ENCODE measurements at regions of chr12 and their contacts with region 1.

Region 1: DNA sequence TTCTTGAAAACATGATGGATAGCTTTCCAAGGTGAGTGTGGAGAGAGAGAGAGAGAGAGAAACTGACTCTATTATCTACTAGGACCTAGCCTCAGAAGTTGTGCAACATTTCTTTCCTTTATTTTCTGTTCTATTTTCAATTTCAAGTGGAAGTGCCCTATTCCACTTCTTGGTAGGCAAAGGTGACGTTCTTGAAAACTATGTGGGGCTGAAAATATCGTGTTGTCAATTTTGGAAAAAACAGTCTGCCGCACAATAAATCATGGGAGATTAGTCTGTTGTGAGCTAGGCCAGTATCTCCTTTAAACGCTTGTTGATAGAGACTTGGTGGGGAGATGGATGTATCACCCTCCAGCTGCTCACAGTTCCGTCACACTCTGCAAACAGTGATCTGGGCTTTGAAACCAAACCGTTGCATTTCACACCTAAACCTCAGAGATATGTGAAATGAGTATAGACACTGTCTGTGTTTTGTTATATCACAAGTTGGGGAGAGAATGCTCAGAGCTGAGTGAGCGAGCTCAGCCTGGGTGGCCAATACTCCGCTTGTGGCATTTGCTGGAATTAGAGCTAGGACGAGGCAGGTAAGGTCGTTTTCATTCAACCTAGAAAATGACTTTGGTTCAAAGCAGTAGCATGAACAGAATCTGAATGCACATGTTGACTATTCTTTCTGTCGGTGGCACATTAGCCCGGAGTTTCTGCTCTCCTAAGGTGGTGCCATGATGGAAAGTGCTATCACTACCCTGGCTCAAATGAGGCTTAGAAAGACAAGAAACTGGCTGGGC is 75.1 kb upstream of the ST8SIA1 start:
- DNase-seq: peak in 4 of 5 donors; percentile 32 to 86 (median 61)
- H3K4me3 ChIP-seq: peak overlapping the region; percentile 52
- H3K4me3 Mint-ChIP-seq: peak overlapping the region; percentile 83 to 96 (median 87)
- H3K27ac ChIP-seq: peak overlapping the region; percentile 86
- H3K27ac Mint-ChIP-seq: peak overlapping the region; percentile 91 to 99 (median 96)
- H3K4me1 ChIP-seq: peaks cover 8% of the 10 kb centered on the region
- H3K4me1 Mint-ChIP-seq: peaks cover 57 to 67% (median 66%) of the 10 kb centered on the region in 3 donors
- H3K27me3 ChIP-seq: no peaks in the 10 kb centered on the region
- H3K27me3 Mint-ChIP-seq: no peaks in the 10 kb centered on the region

Region 2: GRCh38 chr12:22396253-22396652 is 13.3 kb before region 1 on chr12:
- CTCF ChIA-PET with region 1: interaction called, 24 read pairs
- POLR2A ChIA-PET with region 1: interaction called, 40 read pairs
- DNase-seq: peak in 3 of 5 donors; percentile 8 to 64 (median 64)
- H3K4me3 ChIP-seq: no peak overlapping the region
- H3K4me3 Mint-ChIP-seq: peak overlapping the region; percentile 38 to 78 (median 63)
- H3K27ac ChIP-seq: no peak overlapping the region
- H3K27ac Mint-ChIP-seq: peak overlapping the region; percentile 78 to 95 (median 90)
- H3K4me1 ChIP-seq: peaks cover 36% of the 10 kb centered on the region
- H3K4me1 Mint-ChIP-seq: peaks cover 37 to 51% (median 51%) of the 10 kb centered on the region in 3 donors
- H3K27me3 ChIP-seq: no peaks in the 10 kb centered on the region
- H3K27me3 Mint-ChIP-seq: no peaks in the 10 kb centered on the region